ENCODE measurements at regions of chrX and their contacts with region 1.

Region 1: DNA sequence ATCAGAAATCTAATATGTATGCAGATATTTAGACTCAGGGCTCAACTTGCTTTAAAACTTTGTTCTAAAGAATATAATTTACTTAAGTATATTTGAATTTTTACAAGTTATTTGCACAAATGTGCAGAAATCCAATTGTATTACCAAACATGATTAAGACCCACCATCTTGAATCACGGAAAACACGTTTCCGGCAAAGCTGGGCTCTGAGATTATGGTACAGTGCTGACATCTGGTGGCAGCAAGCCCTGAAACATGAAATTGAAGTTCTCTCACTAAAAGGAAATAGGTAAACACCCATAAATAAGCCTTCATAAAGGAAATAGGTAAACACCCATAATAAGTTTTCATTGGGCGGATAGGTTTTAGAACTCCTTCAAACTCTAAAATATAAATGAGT is 98.3 kb upstream of the MAOA start:
- DNase-seq: peak; percentile 21
- ATAC-seq: no peak
- H3K4me3 Mint-ChIP-seq: no peak overlapping the region
- H3K27ac Mint-ChIP-seq: no peak overlapping the region
- H3K4me1 Mint-ChIP-seq: peaks cover 33% of the 10 kb centered on the region
- H3K27me3 Mint-ChIP-seq: no peaks in the 10 kb centered on the region
- CTCF ChIP-seq: no peak

Region 2: GRCh38 chrX:43349363-43349762 is 208.4 kb before region 1 on chrX:
- CTCF ChIA-PET with region 1: interaction called, 14 read pairs
- POLR2A ChIA-PET with region 1: no interaction called
- DNase-seq: peak; percentile 30
- ATAC-seq: peak; percentile 91
- H3K4me3 Mint-ChIP-seq: no peak overlapping the region
- H3K27ac Mint-ChIP-seq: 0 out of 2 replicates have a peak overlapping the region, but pooled peaks have one; percentile 84
- H3K4me1 Mint-ChIP-seq: peaks cover 37% of the 10 kb centered on the region
- H3K27me3 Mint-ChIP-seq: no peaks in the 10 kb centered on the region
- CTCF ChIP-seq: peak; percentile 21; the same call in 1 of the 2 replicates